Cardiac septum (tissue), 1 donor: ENCODE measurements at regions of chr22 and their contacts with region 1.

Region 1: DNA sequence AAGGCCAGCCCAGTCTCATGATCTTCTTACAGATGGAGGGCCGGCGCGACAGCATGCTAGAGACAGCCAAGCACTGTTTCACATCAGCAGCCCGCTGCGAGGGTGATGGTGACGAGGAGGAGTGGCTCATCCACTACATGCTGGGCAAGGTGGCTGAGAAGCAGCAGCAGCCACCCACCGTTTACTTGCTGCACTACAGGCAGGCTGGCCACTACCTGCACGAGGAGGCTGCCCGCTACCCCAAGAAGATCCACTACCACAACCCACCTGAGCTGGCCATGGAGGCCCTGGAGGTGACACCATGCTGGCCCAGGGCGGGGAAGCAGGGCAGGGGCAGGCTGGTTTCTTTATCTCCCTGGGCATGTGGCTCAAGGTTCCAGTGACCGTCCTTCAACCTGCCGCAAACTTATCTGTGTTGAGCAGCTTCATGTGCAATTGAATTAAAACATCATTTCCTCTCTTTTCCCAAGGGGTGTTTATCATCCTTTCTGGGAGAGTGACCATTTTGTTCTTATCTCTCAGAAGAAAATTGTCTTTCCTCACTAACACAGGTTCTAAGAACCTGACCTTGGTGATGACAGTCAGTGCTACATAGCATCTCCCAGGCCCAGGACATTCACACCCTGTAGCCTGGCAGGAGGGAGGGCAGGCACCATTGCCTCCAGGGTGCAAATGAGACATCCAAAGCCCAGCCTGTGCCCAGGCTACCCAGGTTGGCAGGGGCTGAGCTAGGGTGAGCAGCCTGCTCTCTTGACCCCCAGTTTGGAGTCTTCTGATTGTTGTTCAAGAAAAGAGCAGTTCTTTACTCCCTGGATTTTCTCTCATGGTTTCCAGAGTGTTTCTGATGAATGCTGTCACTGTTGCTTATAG is 80.7 kb downstream of the CABIN1 start:
- DNase-seq: peak; percentile 83

Region 2: DNA sequence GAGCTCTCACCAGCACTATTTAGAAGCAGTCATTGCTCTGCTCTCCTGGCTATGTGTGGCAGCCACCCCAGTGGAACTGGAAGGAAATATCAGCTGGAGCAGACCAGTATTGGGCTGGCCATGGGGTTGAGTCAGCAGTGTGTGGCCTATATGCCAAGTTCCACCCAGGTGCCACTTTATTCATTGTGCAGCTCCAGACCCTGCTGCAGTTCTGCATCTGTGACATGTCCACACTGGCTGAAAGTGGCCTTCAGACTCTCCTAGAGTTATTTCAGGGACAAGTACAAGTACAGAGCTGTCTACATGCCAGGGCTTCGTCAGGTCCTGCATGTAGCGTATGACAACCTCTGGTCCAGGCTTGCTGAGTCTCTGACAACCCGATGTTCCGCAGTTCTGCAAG is 25.5 kb before region 1 on chr22:
- intact Hi-C with region 1: no loop called
- DNase-seq: peak; percentile 76

Region 3: GRCh38 chr22:24076091-24076867 is 15.5 kb before region 1 on chr22:
- intact Hi-C with region 1: loop called (anchors 2 kb)
- DNase-seq: peak; percentile 70